Left cardiac atrium (tissue), 4 donors: ENCODE measurements at regions of chr7 and their contacts with region 1.

Region 1: GRCh38 chr7:140003913-140004382 is 58.8 kb downstream of the PARP12 start:
- DNase-seq: no peak
- ATAC-seq: no peak

Region 2: GRCh38 chr7:139494835-139495579 is 508.9 kb before region 1 on chr7:
- intact Hi-C with region 1: loop called (anchors 5 to 10 kb)
- DNase-seq: no peak
- ATAC-seq: peak; percentile 41 to 52

Region 3: GRCh38 chr7:139505563-139505962 is 498.4 kb before region 1 on chr7:
- intact Hi-C with region 1: loop called in 1 of 2 experiments (anchors 10 kb)
- DNase-seq: no peak
- ATAC-seq: no peak

Region 4: DNA sequence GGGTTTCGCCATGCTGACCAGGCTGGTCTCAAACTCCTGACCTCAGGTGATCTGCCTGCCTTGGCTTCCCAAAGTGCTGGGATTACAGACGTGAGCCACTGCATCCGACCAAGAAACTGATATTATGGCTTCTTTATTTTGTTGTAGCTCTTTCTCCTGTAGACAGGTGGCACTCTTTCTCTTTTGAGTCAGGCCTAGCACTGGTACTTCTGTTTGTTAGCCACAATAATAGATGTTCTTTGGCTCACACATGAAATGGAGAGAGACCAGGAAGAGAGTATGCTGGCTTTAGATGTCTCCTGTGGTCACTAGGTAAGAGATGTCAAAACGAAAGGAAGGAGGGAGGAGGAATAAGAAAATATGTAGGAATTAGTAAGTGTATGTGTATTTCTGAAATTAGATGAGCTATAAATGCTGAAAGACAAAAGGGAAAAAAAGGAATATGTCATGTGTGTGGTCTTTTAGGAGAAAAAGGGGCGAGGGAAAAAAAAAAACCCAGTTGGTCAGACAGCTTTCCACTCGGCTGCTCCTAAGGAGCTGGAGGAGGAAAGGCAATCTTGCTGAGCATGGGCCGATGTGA is 401.7 kb before region 1 on chr7:
- intact Hi-C with region 1: loop called in 1 of 2 experiments (anchors 5 kb)
- DNase-seq: no peak
- ATAC-seq: peak; percentile 44 to 49

Region 5: DNA sequence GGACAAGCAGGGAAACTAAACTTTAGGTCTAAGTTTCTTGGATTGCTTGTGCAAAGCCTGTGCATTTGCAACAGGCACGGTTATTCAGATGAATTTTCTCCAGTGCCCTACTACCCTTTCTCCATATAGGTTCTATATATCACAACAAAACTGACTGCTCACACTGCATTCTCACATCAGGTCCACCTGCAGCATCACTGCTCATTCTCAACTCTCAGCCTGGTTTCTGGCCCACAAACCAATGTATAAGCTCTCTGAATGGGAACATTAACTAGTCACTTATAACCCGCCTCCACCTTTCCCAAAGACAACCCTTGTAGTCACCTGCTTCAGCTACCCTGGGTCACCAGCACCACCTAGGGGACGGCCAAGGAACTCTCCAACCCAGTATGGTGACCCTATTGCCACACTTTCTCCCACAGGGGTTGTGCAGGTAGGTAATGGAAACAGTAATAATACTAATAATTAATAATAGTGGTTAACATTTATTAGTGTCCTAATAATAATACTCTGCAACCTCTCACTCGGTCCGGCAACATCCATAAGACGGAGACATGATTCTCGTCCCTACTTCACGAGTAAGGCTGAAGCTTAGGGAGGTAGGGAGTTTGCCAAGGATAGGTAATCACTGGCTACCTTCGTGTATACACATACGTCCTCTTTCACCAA is 383.1 kb before region 1 on chr7:
- intact Hi-C with region 1: loop called in 1 of 2 experiments (anchors 1 kb)
- DNase-seq: no peak
- ATAC-seq: peak; percentile 42 to 44

Region 6: GRCh38 chr7:139645572-139646523 is 358.1 kb before region 1 on chr7:
- intact Hi-C with region 1: loop called (anchors 5 kb)
- DNase-seq: peak; percentile 86
- ATAC-seq: peak; percentile 57 to 62

Region 7: DNA sequence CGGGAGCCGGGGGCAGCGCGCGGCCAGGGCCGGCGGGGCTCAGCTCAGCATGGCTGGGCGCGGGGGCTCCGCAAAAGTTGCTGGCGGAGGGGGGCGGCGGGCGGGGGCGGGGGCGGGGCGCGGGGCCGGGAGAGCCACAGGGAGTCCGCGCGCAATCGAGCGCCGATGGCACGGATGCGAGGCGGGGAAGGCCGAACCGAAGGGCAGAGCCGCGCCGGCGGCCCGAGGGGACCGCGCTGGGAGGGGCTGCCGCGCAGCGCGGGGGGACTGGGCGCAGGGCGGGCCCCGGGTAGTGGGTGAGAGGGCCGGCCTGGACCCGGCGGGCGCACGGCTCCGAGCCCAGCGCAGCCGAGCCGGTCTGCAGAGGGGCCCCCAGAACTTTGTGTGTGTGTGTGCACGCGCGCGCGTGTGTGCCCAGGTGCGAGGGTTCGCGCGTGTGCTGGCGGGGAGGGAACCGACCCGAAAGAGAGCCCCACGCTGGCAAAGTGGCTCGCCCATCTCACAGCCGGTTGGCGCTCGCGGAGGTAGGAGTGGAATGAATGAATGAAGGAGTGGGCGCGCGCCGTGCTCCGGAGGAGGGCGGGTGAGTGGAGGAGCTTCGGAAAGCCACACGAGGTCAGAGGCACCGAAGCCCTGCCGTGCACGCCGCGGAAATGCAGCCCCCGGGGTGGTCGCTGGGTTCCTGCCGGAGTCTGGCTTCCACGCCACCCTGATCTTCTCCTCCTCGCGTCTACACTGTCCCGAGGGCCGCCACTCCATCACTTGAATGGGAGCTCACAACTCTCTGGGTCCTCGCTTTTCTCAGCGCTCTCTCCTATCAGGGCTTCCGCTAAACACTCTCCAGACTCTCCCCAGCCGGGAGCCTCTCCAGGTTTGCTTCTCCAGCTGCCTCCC is 225.8 kb before region 1 on chr7 and contains the start of gene HIPK2:
- intact Hi-C with region 1: loop called (anchors 5 to 10 kb)
- DNase-seq: peak; percentile 89
- ATAC-seq: peak; percentile 88 to 91
- total RNA-seq, gene HIPK2: 123 to 139 TPM